ENCODE measurements at regions of chr1 and their contacts with region 1.

Region 1: DNA sequence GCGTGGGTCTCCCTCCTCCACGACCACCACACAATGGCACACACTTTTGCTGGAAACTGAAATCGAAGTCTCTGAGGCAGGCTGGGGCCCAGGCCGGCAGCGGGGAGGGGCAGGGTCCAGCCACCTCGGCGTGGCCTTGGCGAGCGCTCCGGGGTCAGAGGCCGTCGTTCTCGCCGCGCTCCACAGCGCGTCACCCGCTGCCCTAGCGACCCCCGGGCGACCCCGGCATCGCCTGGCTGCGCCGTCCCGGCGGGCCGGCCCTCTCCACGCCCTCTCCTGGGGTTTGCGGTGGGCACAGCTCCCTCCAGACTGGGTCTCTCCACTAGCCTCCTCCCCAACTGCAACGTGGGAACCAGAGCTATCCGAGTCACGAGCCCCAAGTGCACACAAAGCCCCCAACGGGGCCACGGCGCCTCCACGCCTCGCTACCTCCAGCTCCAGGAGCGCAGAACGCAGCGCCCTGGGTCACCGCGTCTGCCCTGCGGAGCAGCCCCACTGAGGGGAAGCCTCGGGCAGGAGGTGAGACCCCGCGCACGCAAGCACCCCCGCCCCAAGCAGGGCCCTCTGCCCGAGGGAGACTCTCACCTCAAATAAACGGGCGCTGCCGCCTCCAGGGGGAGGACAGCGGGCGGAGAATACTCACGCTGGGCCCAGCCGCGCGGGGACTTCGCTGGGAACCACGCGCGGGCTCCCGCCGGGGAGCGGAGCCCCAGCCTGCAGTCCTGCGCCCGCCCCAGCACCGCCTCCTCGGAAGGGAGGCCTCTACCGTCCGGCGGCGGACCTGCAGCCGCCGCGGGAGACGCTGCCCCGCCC is 134.0 kb upstream of the BARHL2 start:
- DNase-seq: peak; percentile 79
- H3K4me3 Mint-ChIP-seq: peak overlapping the region; percentile 69
- H3K27ac Mint-ChIP-seq: no peak overlapping the region
- H3K4me1 Mint-ChIP-seq: peaks cover 12% of the 10 kb centered on the region
- H3K27me3 Mint-ChIP-seq: peaks cover 39% of the 10 kb centered on the region

Region 2: DNA sequence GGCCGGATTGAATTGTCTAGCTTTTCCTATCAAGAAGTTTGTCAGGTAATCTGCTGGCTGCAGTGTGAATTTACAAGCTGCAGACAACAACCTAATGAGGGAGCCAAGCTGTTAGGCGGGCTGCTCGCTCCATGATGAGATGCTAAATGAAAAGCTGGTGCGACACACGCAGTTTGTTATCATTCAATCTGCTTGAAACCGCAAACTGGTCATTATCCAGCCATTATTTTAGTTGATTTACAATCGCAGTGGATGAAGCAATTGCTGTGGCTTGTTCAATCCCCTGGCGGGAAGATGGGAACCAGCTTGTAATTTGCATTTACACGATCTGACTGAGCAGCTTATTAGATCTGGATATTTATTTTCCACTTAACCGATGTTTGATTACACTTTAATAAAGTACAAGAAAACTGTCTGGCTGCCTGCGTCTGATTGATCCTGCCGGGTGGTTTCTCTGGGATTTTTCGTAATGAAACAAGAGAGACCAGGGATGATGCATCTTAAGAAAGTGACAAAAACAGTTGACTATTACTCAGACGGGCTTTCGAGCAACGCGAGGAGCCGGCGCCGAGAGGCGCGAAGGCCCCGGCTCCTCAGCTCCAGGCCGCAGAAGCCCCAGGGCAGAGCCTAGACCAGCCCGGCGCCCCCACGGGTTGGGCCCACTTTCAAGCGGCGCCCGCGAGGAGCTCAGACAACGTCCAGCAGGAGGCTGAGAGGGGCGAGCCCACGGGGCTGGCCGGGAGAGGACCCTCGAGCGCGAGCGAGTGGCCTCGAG is 16.0 kb before region 1 on chr1:
- CTCF ChIA-PET with region 1: interaction called, 6 read pairs
- intact Hi-C with region 1: loop called (anchors 2 kb)
- DNase-seq: peak; percentile 49
- H3K4me3 Mint-ChIP-seq: no peak overlapping the region
- H3K27ac Mint-ChIP-seq: no peak overlapping the region
- H3K4me1 Mint-ChIP-seq: peaks cover 21% of the 10 kb centered on the region
- H3K27me3 Mint-ChIP-seq: peaks cover 77% of the 10 kb centered on the region

Region 3: GRCh38 chr1:90862782-90863181 is 11.7 kb after region 1 on chr1:
- CTCF ChIA-PET with region 1: no interaction called
- intact Hi-C with region 1: no loop called
- DNase-seq: no peak
- H3K4me3 Mint-ChIP-seq: no peak overlapping the region
- H3K27ac Mint-ChIP-seq: no peak overlapping the region
- H3K4me1 Mint-ChIP-seq: no peaks in the 10 kb centered on the region
- H3K27me3 Mint-ChIP-seq: no peaks in the 10 kb centered on the region

Region 4: GRCh38 chr1:90964444-90965035 is 113.4 kb after region 1 on chr1:
- CTCF ChIA-PET with region 1: interaction called, 4 read pairs
- intact Hi-C with region 1: loop called (anchors 5 kb)
- DNase-seq: no peak
- H3K4me3 Mint-ChIP-seq: no peak overlapping the region
- H3K27ac Mint-ChIP-seq: no peak overlapping the region
- H3K4me1 Mint-ChIP-seq: peaks cover 40% of the 10 kb centered on the region
- H3K27me3 Mint-ChIP-seq: no peaks in the 10 kb centered on the region

Measured in activated naive CD4-positive, alpha-beta T cell treated with anti-CD3 and anti-CD28 coated beads for 36 hours (primary cell).